ENCODE measurements at regions of chr3 and their contacts with region 1.

Region 1: GRCh38 chr3:113575206-113575605 is 42.9 kb downstream of the SIDT1 start:
- DNase-seq: no peak
- ATAC-seq: peak; percentile 46; the same call in 1 of the 2 replicates
- H3K4me3 Mint-ChIP-seq: no peak overlapping the region
- H3K27ac Mint-ChIP-seq: no peak overlapping the region
- H3K4me1 Mint-ChIP-seq: peaks cover 4% of the 10 kb centered on the region; the same call in 1 of the 2 replicates
- H3K27me3 Mint-ChIP-seq: no peaks in the 10 kb centered on the region
- CTCF ChIP-seq: no peak

Region 2: DNA sequence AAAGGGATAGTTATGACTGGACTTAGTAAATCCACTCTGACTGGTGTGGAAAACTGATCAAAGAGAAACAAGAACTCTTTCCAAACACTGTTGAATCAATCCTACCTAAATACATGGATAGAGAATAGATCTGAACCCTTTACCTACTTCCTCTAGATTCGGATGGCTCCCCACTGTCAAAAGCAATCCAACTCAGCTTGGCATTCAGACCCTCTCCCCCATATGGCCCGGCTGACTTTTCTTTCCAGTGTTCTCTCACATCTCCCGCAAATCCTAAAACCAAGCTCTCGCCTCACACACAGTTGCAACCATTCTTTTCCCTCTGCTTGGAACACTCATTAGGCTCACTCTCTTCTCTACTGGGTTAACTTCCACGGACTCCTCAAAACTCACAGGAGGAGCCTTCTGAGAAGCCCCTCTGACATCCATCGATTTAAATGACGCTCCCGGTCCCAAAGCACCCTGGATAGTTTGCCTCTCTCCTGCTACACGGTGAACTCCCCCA is 60.9 kb before region 1 on chr3:
- CTCF ChIA-PET with region 1: interaction called, 17 read pairs
- POLR2A ChIA-PET with region 1: no interaction called
- DNase-seq: no peak
- ATAC-seq: peak; percentile 8
- H3K4me3 Mint-ChIP-seq: no peak overlapping the region
- H3K27ac Mint-ChIP-seq: no peak overlapping the region
- H3K4me1 Mint-ChIP-seq: 0 out of 2 replicates have a peak, but pooled peaks cover 4% of the 10 kb centered on the region
- H3K27me3 Mint-ChIP-seq: peaks cover 24% of the 10 kb centered on the region
- CTCF ChIP-seq: no peak

Region 3: GRCh38 chr3:113552851-113553250 is 22.4 kb before region 1 on chr3:
- CTCF ChIA-PET with region 1: interaction called, 12 read pairs
- POLR2A ChIA-PET with region 1: no interaction called
- DNase-seq: no peak
- ATAC-seq: peak; percentile 65
- H3K4me3 Mint-ChIP-seq: no peak overlapping the region
- H3K27ac Mint-ChIP-seq: no peak overlapping the region
- H3K4me1 Mint-ChIP-seq: no peaks in the 10 kb centered on the region
- H3K27me3 Mint-ChIP-seq: peaks cover 2% of the 10 kb centered on the region; the same call in 1 of the 2 replicates
- CTCF ChIP-seq: no peak

Region 4: DNA sequence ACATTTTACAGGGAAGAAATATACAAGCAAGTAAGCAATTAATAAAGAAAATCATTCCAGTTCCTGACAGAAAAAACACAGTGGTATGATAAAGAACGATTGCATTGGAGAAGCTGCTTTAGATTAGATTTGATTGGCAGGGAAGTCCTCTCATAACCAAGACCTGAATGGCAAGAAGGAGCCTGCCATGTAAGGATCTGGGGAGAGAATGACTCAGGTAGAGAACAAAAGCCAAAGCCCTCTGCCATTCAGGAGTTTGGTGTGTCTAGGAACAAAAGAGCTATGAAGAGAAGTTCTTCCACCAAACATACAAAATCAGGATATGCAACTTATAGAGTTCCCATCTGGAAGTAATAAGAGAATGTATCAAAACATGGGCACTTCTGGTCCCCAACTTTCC is 14.8 kb after region 1 on chr3:
- CTCF ChIA-PET with region 1: interaction called, 13 read pairs
- POLR2A ChIA-PET with region 1: no interaction called
- DNase-seq: no peak
- ATAC-seq: no peak
- H3K4me3 Mint-ChIP-seq: no peak overlapping the region
- H3K27ac Mint-ChIP-seq: no peak overlapping the region
- H3K4me1 Mint-ChIP-seq: peaks cover 53% of the 10 kb centered on the region
- H3K27me3 Mint-ChIP-seq: peaks cover 8% of the 10 kb centered on the region
- CTCF ChIP-seq: no peak

Region 5: GRCh38 chr3:113626503-113627371 is 51.5 kb after region 1 on chr3:
- CTCF ChIA-PET with region 1: interaction called, 11 read pairs
- POLR2A ChIA-PET with region 1: no interaction called
- DNase-seq: peak; percentile 76
- ATAC-seq: peak; percentile 97
- H3K4me3 Mint-ChIP-seq: no peak overlapping the region
- H3K27ac Mint-ChIP-seq: no peak overlapping the region
- H3K4me1 Mint-ChIP-seq: 0 out of 2 replicates have a peak, but pooled peaks cover 7% of the 10 kb centered on the region
- H3K27me3 Mint-ChIP-seq: peaks cover 14% of the 10 kb centered on the region
- CTCF ChIP-seq: peak; percentile 69; the same call in 1 of the 2 replicates

Measured in WTC11 (cell line).